ENCODE measurements at regions of chr11 and their contacts with region 1.

Region 1: DNA sequence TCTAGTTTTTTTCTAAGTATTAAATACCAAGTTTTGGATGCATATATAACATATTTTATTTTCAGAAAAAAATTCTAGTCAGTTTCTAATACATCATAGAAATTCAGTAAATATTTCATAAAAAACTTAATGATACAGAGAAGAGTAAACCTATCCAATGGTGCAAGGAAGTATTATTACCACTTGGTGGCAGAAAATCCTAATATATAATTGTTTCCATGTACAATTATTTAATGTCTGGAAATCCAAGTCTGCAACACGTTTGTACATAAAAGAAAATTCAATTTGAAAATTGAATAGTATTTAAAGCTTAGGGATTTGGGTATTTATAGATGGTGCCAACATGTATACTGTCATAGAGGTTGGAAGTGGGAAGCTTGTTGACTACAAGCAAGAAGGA is 127.0 kb downstream of the TRPC6 start:
- DNase-seq: no peak

Region 2: GRCh38 chr11:101003468-101003867 is 453.3 kb before region 1 on chr11:
- intact Hi-C with region 1: no loop called
- DNase-seq: no peak

Region 3: DNA sequence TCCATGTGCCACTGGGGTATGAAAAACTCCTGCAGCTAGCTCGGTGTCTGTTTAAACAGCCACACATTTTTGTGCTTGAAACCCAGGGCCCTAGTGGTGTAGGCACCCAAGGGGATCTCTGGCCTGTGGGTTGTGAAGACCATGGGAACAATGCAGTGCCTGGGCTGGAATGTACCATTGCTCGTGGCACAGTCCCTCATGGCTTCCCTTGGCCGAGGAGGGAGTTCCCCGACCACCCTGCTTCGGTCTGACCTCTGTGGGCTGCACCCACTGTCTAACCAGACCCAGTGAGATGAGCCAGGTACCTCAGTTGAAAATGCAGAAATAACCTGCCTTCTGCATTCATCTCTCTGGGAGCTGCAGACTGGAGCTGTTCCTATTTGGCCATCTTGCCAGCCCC is 87.0 kb before region 1 on chr11:
- intact Hi-C with region 1: no loop called
- DNase-seq: no peak

Region 4: DNA sequence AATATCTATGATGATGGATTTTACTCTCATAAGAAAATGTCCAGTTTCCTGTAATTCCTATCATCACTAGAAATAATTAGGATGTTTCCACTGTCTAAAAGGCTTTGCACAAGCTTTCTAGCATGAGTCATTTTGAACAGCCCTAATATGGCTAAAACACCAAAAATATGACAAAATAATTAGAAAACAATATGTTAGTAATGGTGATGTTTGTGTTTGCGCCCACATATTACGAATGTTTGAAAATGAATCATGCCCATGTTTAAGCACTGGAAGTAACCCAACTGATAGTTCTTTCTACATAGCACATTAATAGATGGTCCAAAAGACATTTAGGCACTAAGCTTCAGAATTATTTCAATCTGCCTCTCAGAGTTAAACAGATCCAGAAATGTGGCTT is 31.0 kb after region 1 on chr11:
- intact Hi-C with region 1: no loop called
- DNase-seq: no peak

Region 5: DNA sequence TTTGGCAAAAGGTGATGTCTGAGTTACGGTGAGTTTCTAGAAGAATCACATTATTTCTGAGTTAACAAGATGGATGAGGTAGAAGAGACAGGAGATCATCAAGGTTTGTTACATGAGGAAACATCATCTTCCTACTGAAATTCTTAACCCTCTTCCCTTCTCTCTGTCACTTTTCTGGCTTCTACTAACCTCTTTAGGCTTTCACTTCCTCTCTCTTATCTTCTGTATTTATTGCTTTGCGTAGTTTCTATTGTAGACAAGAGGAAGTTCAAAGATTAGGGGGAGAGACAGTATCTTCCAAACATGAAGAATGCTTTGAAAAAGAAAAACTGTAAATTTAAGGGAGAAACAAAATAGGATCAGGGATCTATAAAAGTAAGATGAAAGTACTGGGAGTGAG is 51.6 kb after region 1 on chr11:
- intact Hi-C with region 1: no loop called
- DNase-seq: no peak

Region 6: GRCh38 chr11:101848262-101848661 is 391.4 kb after region 1 on chr11:
- intact Hi-C with region 1: loop called (anchors 5 kb)
- DNase-seq: no peak